ENCODE measurements at regions of chr1 and their contacts with region 1.

Region 1: DNA sequence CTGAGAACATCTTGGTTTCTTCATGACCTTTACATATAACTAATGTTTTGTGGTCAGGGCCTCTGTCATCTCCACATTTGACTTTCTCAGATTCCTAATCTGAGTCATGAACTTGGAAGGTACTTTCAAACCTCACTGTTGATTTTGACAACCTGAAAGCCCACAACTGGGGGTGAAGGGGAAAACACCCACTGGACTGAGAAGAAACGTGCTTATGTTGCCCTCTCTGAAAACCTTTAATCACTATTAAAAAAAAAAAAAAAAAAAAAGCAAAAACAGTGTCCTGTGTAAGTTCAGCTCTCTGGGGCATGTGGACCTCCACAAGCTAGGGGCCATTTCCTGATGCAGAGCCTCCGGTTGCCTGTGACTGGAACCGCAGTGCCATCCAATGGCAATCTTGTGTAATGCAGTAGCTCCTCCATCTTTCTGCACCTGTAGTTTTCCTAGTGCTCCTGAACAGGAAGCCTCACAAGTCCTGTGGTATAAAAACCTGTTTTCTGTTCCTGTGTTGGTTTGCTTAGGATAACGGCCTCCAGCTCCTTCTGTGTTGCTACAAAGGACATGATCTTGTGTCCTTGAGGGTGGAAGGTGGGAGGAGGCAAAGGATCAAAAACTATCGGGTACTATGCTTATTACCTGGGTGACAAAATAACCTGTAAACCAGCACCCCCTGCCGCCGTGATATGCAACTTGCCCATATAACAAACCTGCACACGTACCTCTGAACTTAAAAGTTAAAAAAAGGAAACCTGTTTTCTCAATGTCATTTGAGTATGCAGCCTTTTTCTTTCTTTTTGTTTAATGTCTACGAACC is 124.5 kb downstream of the ZNF648 start:
- DNase-seq: peak; percentile 87
- H3K4me3 Mint-ChIP-seq: no peak overlapping the region
- H3K27ac Mint-ChIP-seq: no peak overlapping the region
- H3K4me1 Mint-ChIP-seq: no peaks in the 10 kb centered on the region
- H3K27me3 Mint-ChIP-seq: no peaks in the 10 kb centered on the region
- CTCF ChIP-seq: peak; percentile 75

Region 2: DNA sequence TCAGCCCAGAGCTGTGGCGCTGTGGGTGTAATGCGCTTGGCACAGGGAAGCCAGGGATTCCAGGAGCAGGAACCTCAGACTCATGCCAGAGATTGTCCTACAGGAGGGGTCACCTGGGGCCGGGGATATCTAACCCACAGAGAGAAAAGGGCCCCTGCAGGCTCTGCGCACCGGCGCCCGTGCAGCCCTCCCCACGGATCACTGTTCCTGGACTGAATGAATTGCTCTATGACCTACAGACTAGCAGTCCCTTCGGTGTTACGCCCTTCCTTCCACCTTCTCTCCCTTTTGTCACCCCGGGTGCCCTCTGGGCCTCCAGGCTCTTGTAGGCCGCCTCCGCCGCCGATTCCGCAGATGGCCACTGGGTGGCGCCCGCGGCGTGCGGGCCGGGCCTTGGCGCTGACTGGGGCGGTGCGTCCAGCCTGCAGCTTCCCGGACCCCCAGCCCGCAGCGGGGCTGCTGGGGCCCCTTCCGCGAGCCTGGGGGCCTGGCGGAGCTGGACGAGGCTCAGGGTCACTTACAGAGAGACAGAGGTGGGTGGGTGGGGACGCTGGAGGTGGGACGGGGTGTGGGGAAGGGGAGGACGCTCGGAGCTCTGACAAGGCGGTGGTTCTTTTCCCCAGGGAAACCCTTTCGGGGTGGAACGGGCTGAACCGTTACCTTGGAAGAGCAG is 747.1 kb before region 1 on chr1:
- CTCF ChIA-PET with region 1: interaction called, 9 read pairs
- POLR2A ChIA-PET with region 1: no interaction called
- intact Hi-C with region 1: loop called (anchors 10 kb)
- DNase-seq: peak; percentile 69
- H3K4me3 Mint-ChIP-seq: no peak overlapping the region
- H3K27ac Mint-ChIP-seq: no peak overlapping the region
- H3K4me1 Mint-ChIP-seq: peaks cover 6% of the 10 kb centered on the region
- H3K27me3 Mint-ChIP-seq: peaks cover 35% of the 10 kb centered on the region
- CTCF ChIP-seq: peak; percentile 100

Region 3: DNA sequence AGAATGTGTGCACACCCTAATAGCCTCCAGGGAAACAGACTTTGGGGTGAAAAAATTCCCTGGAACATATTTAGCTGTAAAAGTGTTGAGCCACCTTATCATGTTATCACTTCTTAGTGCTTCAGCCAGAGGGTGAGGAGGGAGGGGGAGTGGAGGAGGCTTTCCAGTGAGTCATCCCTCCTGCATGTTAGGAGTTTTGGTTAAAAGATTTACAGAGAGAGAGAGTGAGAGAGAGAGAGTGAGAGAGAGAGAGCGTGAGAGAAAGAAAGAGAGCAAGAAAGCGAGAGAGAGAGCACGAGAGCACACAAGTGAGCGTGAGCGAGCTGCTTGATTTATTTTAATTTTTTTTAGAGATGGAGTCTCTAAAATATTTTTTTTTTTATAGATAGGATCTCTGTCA is 467.1 kb before region 1 on chr1:
- CTCF ChIA-PET with region 1: interaction called, 410 read pairs
- POLR2A ChIA-PET with region 1: interaction called, 6 read pairs
- intact Hi-C with region 1: loop called (anchors 2 kb)
- DNase-seq: peak; percentile 87
- H3K4me3 Mint-ChIP-seq: peak overlapping the region; percentile 13
- H3K27ac Mint-ChIP-seq: peak overlapping the region; percentile 0
- H3K4me1 Mint-ChIP-seq: peaks cover 19% of the 10 kb centered on the region
- H3K27me3 Mint-ChIP-seq: no peaks in the 10 kb centered on the region
- CTCF ChIP-seq: no peak

Region 4: DNA sequence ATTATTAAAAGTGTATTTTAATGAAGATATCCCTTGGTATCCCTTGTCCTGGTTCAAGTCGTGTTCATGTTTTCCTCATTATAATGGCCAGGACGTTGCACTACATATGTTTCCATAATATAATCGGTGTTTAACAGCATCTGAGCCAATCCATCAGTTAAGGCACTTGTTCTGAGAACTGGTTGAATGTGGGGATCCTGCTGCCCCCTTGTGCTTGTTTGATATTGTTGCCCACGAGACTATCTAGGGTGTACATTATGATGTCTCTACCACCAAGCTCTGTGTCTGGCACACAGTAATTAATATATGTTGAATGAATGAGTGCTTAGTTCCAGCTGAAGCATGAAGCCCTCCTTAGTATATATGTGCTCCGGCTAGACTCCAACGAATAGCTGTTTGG is 260.7 kb before region 1 on chr1:
- CTCF ChIA-PET with region 1: interaction called, 39 read pairs
- POLR2A ChIA-PET with region 1: no interaction called
- intact Hi-C with region 1: loop called (anchors 2 kb)
- DNase-seq: peak; percentile 77
- H3K4me3 Mint-ChIP-seq: no peak overlapping the region
- H3K27ac Mint-ChIP-seq: no peak overlapping the region
- H3K4me1 Mint-ChIP-seq: no peaks in the 10 kb centered on the region
- H3K27me3 Mint-ChIP-seq: peaks cover 12% of the 10 kb centered on the region
- CTCF ChIP-seq: peak; percentile 75

Region 5: GRCh38 chr1:181759481-181759880 is 177.5 kb before region 1 on chr1:
- CTCF ChIA-PET with region 1: interaction called, 11 read pairs
- POLR2A ChIA-PET with region 1: no interaction called
- intact Hi-C with region 1: no loop called
- DNase-seq: no peak
- H3K4me3 Mint-ChIP-seq: no peak overlapping the region
- H3K27ac Mint-ChIP-seq: no peak overlapping the region
- H3K4me1 Mint-ChIP-seq: no peaks in the 10 kb centered on the region
- H3K27me3 Mint-ChIP-seq: peaks cover 12% of the 10 kb centered on the region
- CTCF ChIP-seq: no peak

Region 6: GRCh38 chr1:181947441-181947840 is 10.5 kb after region 1 on chr1:
- CTCF ChIA-PET with region 1: interaction called, 10 read pairs
- POLR2A ChIA-PET with region 1: no interaction called
- intact Hi-C with region 1: no loop called
- DNase-seq: no peak
- H3K4me3 Mint-ChIP-seq: no peak overlapping the region
- H3K27ac Mint-ChIP-seq: no peak overlapping the region
- H3K4me1 Mint-ChIP-seq: no peaks in the 10 kb centered on the region
- H3K27me3 Mint-ChIP-seq: peaks cover 38% of the 10 kb centered on the region
- CTCF ChIP-seq: no peak